H1 (cell line): ENCODE measurements at regions of chr7 and their contacts with region 1.

Region 1: GRCh38 chr7:51141451-51142003 is 175.1 kb downstream of the COBL start:
- DNase-seq: peak in 1 of 2 experiments; percentile 52
- H3K4me3 ChIP-seq: no peak overlapping the region
- H3K27ac ChIP-seq: no peak overlapping the region
- H3K4me1 ChIP-seq: peaks cover 4 to 8% (median 6%) of the 10 kb centered on the region in 4 experiments
- H3K27me3 ChIP-seq: no peaks in the 10 kb centered on the region
- CTCF ChIP-seq: peak in 2 of 3 experiments; percentile 54 to 58; a peak in 2 of 4 replicates
- EP300 ChIP-seq: no peak
- POLR2A ChIP-seq: no peak
- RAD21 ChIP-seq: peak; percentile 85 to 86

Region 2: GRCh38 chr7:51000956-51001355 is 140.6 kb before region 1 on chr7:
- CTCF ChIA-PET with region 1: interaction called, 21 read pairs
- POLR2A ChIA-PET with region 1: no interaction called
- DNase-seq: no peak
- H3K4me3 ChIP-seq: no peak overlapping the region
- H3K27ac ChIP-seq: no peak overlapping the region
- H3K4me1 ChIP-seq: no peaks in the 10 kb centered on the region
- H3K27me3 ChIP-seq: no peaks in the 10 kb centered on the region
- CTCF ChIP-seq: peak in 2 of 3 experiments; percentile 40 to 55; a peak in 3 of 4 replicates
- EP300 ChIP-seq: no peak
- POLR2A ChIP-seq: no peak
- RAD21 ChIP-seq: peak; percentile 62 to 73

Region 3: DNA sequence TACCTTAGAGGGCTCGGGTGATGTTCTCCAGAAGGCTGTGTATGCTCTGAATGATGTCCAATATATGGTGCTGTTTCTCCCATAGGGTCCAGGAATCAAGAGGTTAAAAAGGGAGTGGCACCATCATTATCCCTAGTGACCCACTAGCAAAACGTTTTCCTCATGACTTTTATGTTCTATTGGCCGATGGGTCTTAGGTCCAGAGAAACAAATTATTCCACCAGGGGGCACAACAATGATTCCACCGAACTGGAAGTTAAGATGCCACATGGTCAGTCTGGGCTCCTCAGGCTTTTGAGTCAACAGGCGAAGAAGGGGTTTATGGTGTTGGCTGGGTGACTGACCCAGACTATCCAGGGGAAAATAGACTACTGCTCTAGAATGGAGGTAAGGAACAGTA is 81.0 kb before region 1 on chr7:
- CTCF ChIA-PET with region 1: interaction called, 29 read pairs
- POLR2A ChIA-PET with region 1: no interaction called
- DNase-seq: no peak
- H3K4me3 ChIP-seq: no peak overlapping the region
- H3K27ac ChIP-seq: no peak overlapping the region
- H3K4me1 ChIP-seq: peaks cover 0 to 2% (median under 1%) of the 10 kb centered on the region in 4 experiments; a peak in 1 of 7 replicates
- H3K27me3 ChIP-seq: no peaks in the 10 kb centered on the region
- CTCF ChIP-seq: peak in 1 of 3 experiments; percentile 35; a peak in 1 of 4 replicates
- EP300 ChIP-seq: no peak
- POLR2A ChIP-seq: no peak
- RAD21 ChIP-seq: peak in 1 of 2 experiments; percentile 40; a peak in 2 of 4 replicates

Region 4: GRCh38 chr7:51129527-51130472 is 11.7 kb before region 1 on chr7:
- CTCF ChIA-PET with region 1: interaction called, 19 read pairs
- POLR2A ChIA-PET with region 1: no interaction called
- DNase-seq: peak in 1 of 2 experiments; percentile 35
- H3K4me3 ChIP-seq: no peak overlapping the region
- H3K27ac ChIP-seq: no peak overlapping the region
- H3K4me1 ChIP-seq: no peaks in the 10 kb centered on the region
- H3K27me3 ChIP-seq: no peaks in the 10 kb centered on the region
- CTCF ChIP-seq: no peak
- EP300 ChIP-seq: no peak
- POLR2A ChIP-seq: no peak
- RAD21 ChIP-seq: no peak